ENCODE measurements at regions of chr12 and their contacts with region 1.

Region 1: DNA sequence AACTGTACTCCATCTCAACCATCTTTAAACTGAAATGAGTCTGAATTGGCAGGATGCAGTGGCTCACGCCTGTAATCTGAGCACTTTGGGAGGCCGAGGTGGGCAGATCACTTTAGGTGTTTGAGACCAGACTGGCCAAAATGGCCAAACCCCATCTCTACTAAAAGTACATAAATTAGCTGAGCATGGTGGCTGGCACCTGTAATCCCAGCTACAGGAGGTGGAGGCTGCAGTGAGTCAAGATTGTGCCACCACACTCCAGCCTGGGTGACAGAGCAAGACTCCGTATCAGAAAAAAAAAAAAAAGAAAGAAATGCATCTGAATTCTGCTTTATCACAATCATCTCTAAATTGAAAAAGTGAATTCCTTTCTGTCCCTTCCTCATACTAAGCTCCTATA is 110.3 kb downstream of the NELL2 start:
- DNase-seq: no peak
- H3K4me3 Mint-ChIP-seq: no peak overlapping the region
- H3K27ac Mint-ChIP-seq: no peak overlapping the region
- H3K4me1 Mint-ChIP-seq: no peaks in the 10 kb centered on the region
- H3K27me3 Mint-ChIP-seq: no peaks in the 10 kb centered on the region

Region 2: GRCh38 chr12:44942714-44943113 is 176.9 kb after region 1 on chr12:
- CTCF ChIA-PET with region 1: interaction called, 11 read pairs
- POLR2A ChIA-PET with region 1: no interaction called
- intact Hi-C with region 1: no loop called
- DNase-seq: no peak
- H3K4me3 Mint-ChIP-seq: no peak overlapping the region
- H3K27ac Mint-ChIP-seq: no peak overlapping the region
- H3K4me1 Mint-ChIP-seq: no peaks in the 10 kb centered on the region
- H3K27me3 Mint-ChIP-seq: peaks cover 1% of the 10 kb centered on the region